Posterior cingulate gyrus (tissue), 11 donors: ENCODE measurements at regions of chr13 and their contacts with region 1.

Region 1: GRCh38 chr13:100156788-100157187 is 67.9 kb downstream of the PCCA start:
- DNase-seq: no peak

Region 2: GRCh38 chr13:100229603-100230002 is 72.8 kb after region 1 on chr13:
- intact Hi-C with region 1: loop called (anchors 10 kb)
- DNase-seq: no peak

Region 3: GRCh38 chr13:100290165-100290801 is 133.5 kb after region 1 on chr13:
- intact Hi-C with region 1: no loop called
- DNase-seq: no peak

Region 4: GRCh38 chr13:100646030-100646673 is 489.4 kb after region 1 on chr13:
- intact Hi-C with region 1: no loop called
- DNase-seq: peak in 9 of 10 donors; percentile 54 to 95 (median 75)